ENCODE measurements at regions of chr16 and their contacts with region 1.

Region 1: GRCh38 chr16:11977376-11978041 is 975 bp downstream of the SNX29 start:
- DNase-seq: peak; percentile 15
- ATAC-seq: peak; percentile 25; the same call in 1 of the 2 replicates
- H3K4me3 ChIP-seq: peak overlapping the region; percentile 94 to 97
- H3K27ac ChIP-seq: no peak overlapping the region
- H3K4me1 ChIP-seq: peaks cover 2 to 19% of the 10 kb centered on the region in 2 experiments; a peak in 3 of 4 replicates
- H3K27me3 ChIP-seq: no peaks in the 10 kb centered on the region
- CTCF ChIP-seq: no peak
- POLR2A ChIP-seq: no peak
- RAD21 ChIP-seq: no peak

Region 2: GRCh38 chr16:11742539-11743307 is 234.8 kb before region 1 on chr16 and contains the start of gene TXNDC11:
- CTCF ChIA-PET with region 1: no interaction called
- POLR2A ChIA-PET with region 1: no interaction called
- RAD21 ChIA-PET with region 1: no interaction called
- intact Hi-C with region 1: no loop called
- DNase-seq: peak; percentile 94
- ATAC-seq: peak; percentile 91
- H3K4me3 ChIP-seq: peak within 1 kb of the TSS; percentile 82 to 89
- H3K27ac ChIP-seq: peak within 1 kb of the TSS; percentile 89
- H3K4me1 ChIP-seq: peaks cover 18 to 29% of the 10 kb centered on the region in 2 experiments; a peak in 3 of 4 replicates
- H3K27me3 ChIP-seq: no peaks in the 10 kb centered on the region
- CTCF ChIP-seq: no peak
- POLR2A ChIP-seq: peak; percentile 81
- RAD21 ChIP-seq: no peak
- total RNA-seq, gene TXNDC11: 26.8 TPM

Region 3: GRCh38 chr16:11915644-11916523 is 61.6 kb before region 1 on chr16 and contains the start of gene GSPT1:
- CTCF ChIA-PET with region 1: interaction called, 3 read pairs
- POLR2A ChIA-PET with region 1: interaction called, 4 read pairs
- RAD21 ChIA-PET with region 1: no interaction called
- intact Hi-C with region 1: loop called (anchors 5 kb)
- DNase-seq: peak; percentile 97
- ATAC-seq: peak; percentile 92
- H3K4me3 ChIP-seq: peak within 1 kb of the TSS; percentile 64 to 92
- H3K27ac ChIP-seq: peak within 1 kb of the TSS; percentile 81
- H3K4me1 ChIP-seq: peaks cover 17 to 27% of the 10 kb centered on the region in 2 experiments
- H3K27me3 ChIP-seq: no peaks in the 10 kb centered on the region
- CTCF ChIP-seq: peak in 1 of 3 experiments; percentile 25; a peak in 2 of 6 replicates
- POLR2A ChIP-seq: peak; percentile 75
- RAD21 ChIP-seq: no peak
- total RNA-seq, gene GSPT1: 148 TPM

Region 4: DNA sequence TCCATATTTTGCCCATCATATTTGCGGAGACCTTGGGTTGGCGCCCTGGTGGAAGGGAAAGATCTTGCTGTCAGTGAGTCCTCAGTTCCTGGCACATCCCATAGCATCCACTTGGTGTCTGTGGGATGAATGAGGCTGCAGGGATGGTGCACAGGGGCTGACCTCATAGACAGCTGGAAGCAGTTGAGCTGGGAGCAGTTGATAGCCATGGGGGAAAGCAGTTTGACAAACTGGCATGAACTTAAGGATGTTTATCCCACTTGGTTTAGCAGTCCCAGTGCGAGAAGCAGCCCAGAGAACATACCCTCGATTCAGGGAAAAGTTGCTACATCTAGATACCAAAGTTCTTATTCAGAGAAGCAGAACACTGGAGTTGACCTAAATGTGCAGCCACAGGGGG is 79.8 kb after region 1 on chr16:
- CTCF ChIA-PET with region 1: no interaction called
- POLR2A ChIA-PET with region 1: no interaction called
- RAD21 ChIA-PET with region 1: no interaction called
- intact Hi-C with region 1: no loop called
- DNase-seq: no peak
- ATAC-seq: peak; percentile 40; the same call in 1 of the 2 replicates
- H3K4me3 ChIP-seq: no peak overlapping the region
- H3K27ac ChIP-seq: no peak overlapping the region
- H3K4me1 ChIP-seq: peaks cover 10 to 13% of the 10 kb centered on the region in 2 experiments; a peak in 2 of 4 replicates
- H3K27me3 ChIP-seq: no peaks in the 10 kb centered on the region
- CTCF ChIP-seq: no peak
- POLR2A ChIP-seq: no peak
- RAD21 ChIP-seq: no peak

Measured in HCT116 (cell line).